ENCODE measurements at regions of chr3 and their contacts with region 1.

Region 1: GRCh38 chr3:50227390-50228183 is 8.4 kb upstream of the GNAI2 start:
- DNase-seq: peak; percentile 92 to 97 (median 97)
- ATAC-seq: peak; percentile 91 to 92
- H3K4me3 ChIP-seq: peak overlapping the region; percentile 49
- H3K27ac ChIP-seq: peak overlapping the region; percentile 54
- H3K4me1 ChIP-seq: no peaks in the 10 kb centered on the region
- H3K27me3 ChIP-seq: no peaks in the 10 kb centered on the region

Region 2: DNA sequence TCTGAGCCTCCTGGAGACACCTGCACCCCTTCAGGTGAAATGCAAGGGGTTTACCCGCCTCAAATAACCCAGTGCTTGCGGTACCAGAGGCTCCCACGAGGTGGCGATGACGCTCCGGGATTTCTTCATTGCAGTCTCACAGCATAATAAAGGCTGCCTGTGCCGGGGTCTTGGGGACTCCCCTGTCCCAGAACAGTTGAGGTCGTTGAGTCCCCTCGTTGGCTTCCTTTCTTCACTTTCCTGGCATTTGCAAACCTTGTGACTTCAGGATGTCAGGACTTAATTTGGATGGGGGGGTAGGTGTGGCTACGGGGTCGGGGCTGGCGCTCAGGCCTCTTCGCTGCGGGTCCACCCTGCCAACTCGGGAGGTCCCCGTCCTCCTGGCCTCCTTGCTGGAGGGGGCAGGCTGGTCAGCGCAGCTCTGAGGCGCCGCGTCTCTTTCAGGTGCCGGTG is 34.9 kb before region 1 on chr3:
- intact Hi-C with region 1: loop called (anchors 2 to 5 kb)
- DNase-seq: peak; percentile 57 to 88 (median 84)
- ATAC-seq: peak in 1 of 2 donors; percentile 5
- H3K4me3 ChIP-seq: no peak overlapping the region
- H3K27ac ChIP-seq: no peak overlapping the region
- H3K4me1 ChIP-seq: no peaks in the 10 kb centered on the region
- H3K27me3 ChIP-seq: no peaks in the 10 kb centered on the region

Region 3: GRCh38 chr3:50245831-50246516 is 18.4 kb after region 1 on chr3:
- intact Hi-C with region 1: loop called in 1 of 4 experiments (anchors 2 kb)
- DNase-seq: peak; percentile 92 to 97 (median 96)
- ATAC-seq: peak; percentile 76 to 78
- H3K4me3 ChIP-seq: peak overlapping the region; percentile 19
- H3K27ac ChIP-seq: peak overlapping the region; percentile 62
- H3K4me1 ChIP-seq: peaks cover 62% of the 10 kb centered on the region
- H3K27me3 ChIP-seq: no peaks in the 10 kb centered on the region

Region 4: GRCh38 chr3:50272911-50273693 is 45.5 kb after region 1 on chr3:
- intact Hi-C with region 1: loop called (anchors 2 to 5 kb)
- DNase-seq: peak; percentile 81 to 95 (median 94)
- ATAC-seq: peak; percentile 58 to 63
- H3K4me3 ChIP-seq: no peak overlapping the region
- H3K27ac ChIP-seq: no peak overlapping the region
- H3K4me1 ChIP-seq: peaks cover 2% of the 10 kb centered on the region
- H3K27me3 ChIP-seq: no peaks in the 10 kb centered on the region

Region 5: DNA sequence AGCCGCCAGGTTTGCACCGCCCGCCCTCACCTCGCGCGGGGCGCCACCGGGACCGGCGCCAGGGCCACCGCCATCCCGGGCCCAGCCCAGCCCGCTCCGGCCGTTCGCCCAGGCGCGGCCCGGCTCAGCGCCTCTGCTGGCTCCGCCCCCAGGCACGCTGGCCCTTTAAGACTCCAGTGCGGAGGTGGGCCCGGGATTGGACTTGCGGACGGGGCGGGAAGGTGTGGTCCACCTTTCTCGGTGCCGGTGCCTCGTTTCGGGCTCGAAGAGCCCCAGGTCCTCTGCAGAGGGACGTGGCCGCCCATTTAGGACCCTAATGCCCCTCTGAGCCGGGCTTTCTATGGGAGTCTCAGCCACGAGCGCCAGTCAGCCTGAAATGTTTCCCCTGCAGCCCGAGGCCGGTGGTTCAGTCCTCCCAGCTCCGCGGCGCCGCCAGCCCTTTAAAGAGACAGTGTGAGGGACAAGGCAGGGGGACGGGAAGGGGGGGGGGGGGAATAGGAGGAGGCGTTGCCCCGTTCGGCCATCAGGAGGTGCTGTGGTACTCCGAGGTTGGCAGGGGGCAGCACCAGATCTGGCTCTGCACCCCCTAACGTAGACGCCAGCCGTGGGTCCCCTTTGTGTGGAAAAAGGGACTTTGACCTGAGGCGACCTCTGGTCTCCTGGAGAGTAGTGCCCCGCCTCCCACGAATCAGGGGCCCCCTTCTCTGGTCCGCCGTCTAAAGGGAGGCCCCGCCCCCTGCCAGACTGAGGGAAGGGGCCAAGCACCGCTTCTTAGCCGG is 93.9 kb after region 1 on chr3:
- intact Hi-C with region 1: loop called in 1 of 4 experiments (anchors 5 kb)
- DNase-seq: peak; percentile 91 to 97 (median 96)
- ATAC-seq: peak; percentile 35 to 76
- H3K4me3 ChIP-seq: peak overlapping the region; percentile 85
- H3K27ac ChIP-seq: peak overlapping the region; percentile 96
- H3K4me1 ChIP-seq: peaks cover 9% of the 10 kb centered on the region
- H3K27me3 ChIP-seq: no peaks in the 10 kb centered on the region

Measured in right cardiac atrium (tissue), 5 donors.